ENCODE measurements at regions of chr12 and their contacts with region 1.

Region 1: GRCh38 chr12:95336390-95337067 is 118.9 kb downstream of the VEZT start:
- DNase-seq: peak; percentile 86
- H3K4me3 ChIP-seq: peak overlapping the region; percentile 19 to 48; a peak in 2 of 4 replicates
- H3K27ac ChIP-seq: peak overlapping the region; percentile 33 to 92; a peak in 3 of 4 replicates
- H3K4me1 ChIP-seq: peaks cover 0 to 3% of the 10 kb centered on the region in 2 experiments; a peak in 1 of 4 replicates
- H3K27me3 ChIP-seq: no peaks in the 10 kb centered on the region
- CTCF ChIP-seq: peak; percentile 98
- EP300 ChIP-seq: peak in 1 of 2 experiments; percentile 59; a peak in 1 of 4 replicates
- RAD21 ChIP-seq: peak; percentile 99

Region 2: DNA sequence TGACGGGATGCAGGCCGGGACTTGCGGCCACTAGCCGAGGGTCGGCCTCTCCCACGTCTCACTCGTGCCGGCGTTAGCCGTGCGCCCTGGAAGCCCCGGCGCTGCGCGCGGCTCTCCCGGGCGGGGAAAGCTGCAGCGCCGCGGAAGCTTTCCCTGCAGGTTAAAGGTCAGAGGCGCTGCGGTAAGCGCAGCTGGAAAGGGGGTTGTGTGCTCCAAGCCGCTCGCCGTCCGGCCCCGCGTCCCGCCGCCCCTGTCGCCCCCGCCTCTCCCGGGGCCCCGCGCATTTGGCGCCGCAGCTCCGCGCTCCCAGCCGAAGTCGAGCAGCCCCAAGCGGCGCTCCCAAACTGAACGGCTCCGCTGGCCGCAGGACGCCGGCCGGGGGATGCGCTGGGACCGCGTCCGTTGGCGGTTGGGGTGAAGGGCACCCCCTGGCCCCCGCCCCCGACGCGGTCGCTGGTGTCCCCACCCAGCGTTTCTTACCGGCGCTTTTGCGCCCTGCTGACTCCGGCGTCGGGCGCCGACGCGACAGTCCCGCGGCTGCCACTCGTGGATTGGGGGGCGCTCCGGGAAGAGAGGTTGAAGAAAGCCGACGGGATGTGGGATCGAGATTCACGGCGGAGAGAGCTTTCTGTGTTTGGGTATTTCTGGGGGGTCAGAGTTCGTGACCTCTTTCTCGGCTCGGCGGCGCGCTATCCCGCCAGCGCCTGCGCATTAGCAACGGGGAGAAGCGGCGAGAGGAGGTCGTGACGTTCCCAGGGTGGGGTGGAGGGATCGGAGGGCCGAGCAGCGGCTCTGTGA is 263.4 kb before region 1 on chr12 and contains the start of gene NR2C1:
- CTCF ChIA-PET with region 1: interaction called, 18 read pairs
- POLR2A ChIA-PET with region 1: interaction called, 6 read pairs
- DNase-seq: peak; percentile 98
- H3K4me3 ChIP-seq: peak within 1 kb of the TSS; percentile 77 to 94
- H3K27ac ChIP-seq: peak within 1 kb of the TSS; percentile 56 to 73; a peak in 3 of 4 replicates
- H3K4me1 ChIP-seq: no peaks in the 10 kb centered on the region
- H3K27me3 ChIP-seq: no peaks in the 10 kb centered on the region
- CTCF ChIP-seq: no peak
- EP300 ChIP-seq: no peak
- RAD21 ChIP-seq: no peak
- polyA plus RNA-seq, gene NR2C1: 15.9 and 19.1 TPM in 2 replicates

Region 3: DNA sequence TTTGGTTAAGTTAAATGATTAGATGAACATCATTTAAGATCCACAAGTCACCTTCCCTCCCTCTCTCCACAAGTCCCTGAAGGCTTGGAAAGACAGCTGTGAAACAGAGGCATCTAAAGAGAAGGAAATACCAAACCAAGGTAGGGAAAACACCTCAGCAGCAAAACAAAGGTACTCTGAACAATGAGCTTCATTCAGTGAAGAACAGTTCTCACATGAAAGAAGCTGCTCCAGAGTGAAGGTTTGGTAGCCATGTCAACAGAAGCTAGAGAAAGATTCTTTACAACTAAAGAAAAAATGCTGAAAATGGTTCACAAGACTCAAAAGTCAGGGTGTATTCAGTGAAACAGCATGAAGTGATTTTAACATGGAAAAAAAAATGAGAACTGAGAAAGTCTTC is 188.7 kb before region 1 on chr12:
- CTCF ChIA-PET with region 1: interaction called, 11 read pairs
- POLR2A ChIA-PET with region 1: no interaction called
- DNase-seq: no peak
- H3K4me3 ChIP-seq: no peak overlapping the region
- H3K27ac ChIP-seq: no peak overlapping the region
- H3K4me1 ChIP-seq: peaks cover 4 to 20% of the 10 kb centered on the region in 2 experiments; a peak in 2 of 4 replicates
- H3K27me3 ChIP-seq: no peaks in the 10 kb centered on the region
- CTCF ChIP-seq: no peak
- EP300 ChIP-seq: no peak
- RAD21 ChIP-seq: no peak

Region 4: DNA sequence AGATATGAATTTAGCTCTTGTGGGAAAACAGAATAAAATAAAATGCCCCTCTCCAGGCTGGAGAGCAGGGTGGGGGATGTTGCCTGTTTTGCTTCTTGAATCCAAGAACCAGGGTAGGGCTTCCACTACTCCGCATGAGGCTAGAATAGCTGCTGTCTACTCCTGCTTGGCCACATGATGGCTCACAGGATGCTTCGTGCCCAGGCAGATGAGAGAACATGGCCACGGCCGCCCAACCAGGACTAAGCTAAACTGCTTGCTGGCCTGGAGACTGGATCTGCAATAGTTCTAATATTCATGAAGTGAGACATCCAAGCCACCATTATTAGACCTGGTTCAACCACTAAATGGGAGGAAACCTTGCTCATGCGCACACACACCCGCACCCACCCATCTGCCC is 15.2 kb after region 1 on chr12:
- CTCF ChIA-PET with region 1: interaction called, 19 read pairs
- POLR2A ChIA-PET with region 1: no interaction called
- DNase-seq: no peak
- H3K4me3 ChIP-seq: no peak overlapping the region
- H3K27ac ChIP-seq: no peak overlapping the region
- H3K4me1 ChIP-seq: no peaks in the 10 kb centered on the region
- H3K27me3 ChIP-seq: no peaks in the 10 kb centered on the region
- CTCF ChIP-seq: no peak
- EP300 ChIP-seq: no peak
- RAD21 ChIP-seq: no peak

Region 5: DNA sequence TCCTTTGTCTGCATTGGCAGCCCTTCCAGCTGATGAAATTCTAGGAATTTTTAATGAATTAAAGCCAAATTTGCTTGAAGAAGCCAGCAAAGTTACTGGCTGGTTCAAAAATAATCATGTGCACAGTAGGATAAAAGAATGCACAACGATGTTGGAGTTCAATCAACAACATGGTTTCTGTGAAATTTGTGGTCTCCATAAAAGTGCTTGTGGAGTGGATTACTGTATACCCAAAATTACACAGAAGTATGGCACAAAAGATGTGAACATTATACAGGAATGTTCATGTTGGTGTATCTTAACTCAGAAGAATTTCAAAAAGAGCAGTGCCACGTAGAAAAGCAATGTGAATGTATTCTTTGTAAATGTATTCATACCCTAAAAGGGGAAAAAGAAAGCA is 32.4 kb after region 1 on chr12:
- CTCF ChIA-PET with region 1: no interaction called
- POLR2A ChIA-PET with region 1: no interaction called
- DNase-seq: no peak
- H3K4me3 ChIP-seq: no peak overlapping the region
- H3K27ac ChIP-seq: no peak overlapping the region
- H3K4me1 ChIP-seq: no peaks in the 10 kb centered on the region
- H3K27me3 ChIP-seq: no peaks in the 10 kb centered on the region
- CTCF ChIP-seq: no peak
- EP300 ChIP-seq: no peak
- RAD21 ChIP-seq: no peak

Region 6: GRCh38 chr12:95446506-95446900 is 110.0 kb after region 1 on chr12:
- CTCF ChIA-PET with region 1: no interaction called
- POLR2A ChIA-PET with region 1: no interaction called
- DNase-seq: peak; percentile 22
- H3K4me3 ChIP-seq: no peak overlapping the region
- H3K27ac ChIP-seq: no peak overlapping the region
- H3K4me1 ChIP-seq: no peaks in the 10 kb centered on the region
- H3K27me3 ChIP-seq: no peaks in the 10 kb centered on the region; the same call in 1 of the 2 replicates
- CTCF ChIP-seq: no peak
- EP300 ChIP-seq: no peak
- RAD21 ChIP-seq: no peak

Region 7: GRCh38 chr12:95533985-95534384 is 197.5 kb after region 1 on chr12:
- CTCF ChIA-PET with region 1: interaction called, 16 read pairs
- POLR2A ChIA-PET with region 1: no interaction called
- DNase-seq: no peak
- H3K4me3 ChIP-seq: no peak overlapping the region
- H3K27ac ChIP-seq: no peak overlapping the region
- H3K4me1 ChIP-seq: no peaks in the 10 kb centered on the region; a peak in 1 of 4 replicates
- H3K27me3 ChIP-seq: no peaks in the 10 kb centered on the region
- CTCF ChIP-seq: no peak
- EP300 ChIP-seq: no peak
- RAD21 ChIP-seq: no peak

Measured in SK-N-SH (cell line).